Sciatic nerve (tissue), 2 donors: ENCODE measurements at regions of chr15 and their contacts with region 1.

Region 1: DNA sequence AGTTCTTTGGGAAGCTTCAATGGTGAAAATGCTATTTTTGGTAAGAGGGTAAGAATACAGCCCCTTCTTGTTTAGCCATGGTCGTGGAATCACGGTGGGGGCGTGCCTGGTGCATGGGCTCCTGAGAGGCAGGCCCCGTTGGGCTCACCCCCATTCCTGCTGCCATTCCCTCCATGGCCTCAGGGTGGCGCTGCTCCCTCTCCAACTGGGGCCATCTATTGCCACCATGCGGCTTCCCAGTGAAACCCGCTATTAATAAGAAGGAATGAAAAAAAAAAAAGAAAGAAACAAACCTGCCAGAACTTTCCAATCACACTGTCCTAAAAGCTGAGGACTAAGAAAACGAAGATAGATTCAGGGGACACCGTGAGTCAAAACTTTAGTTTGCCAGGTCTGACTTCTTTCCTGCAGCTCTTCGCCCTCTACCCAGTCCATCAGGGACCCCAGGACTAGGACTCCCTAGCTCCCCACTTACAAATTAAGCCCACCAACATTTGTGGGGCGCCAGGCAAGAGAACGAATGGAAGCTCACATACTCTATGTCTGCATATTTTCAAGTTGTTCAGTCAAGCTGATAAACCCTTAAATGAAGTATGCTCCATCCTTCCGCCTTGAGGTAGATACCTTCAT is 30.6 kb upstream of the ABHD2 start:
- DNase-seq: peak; percentile 90
- ATAC-seq: peak; percentile 89

Region 2: DNA sequence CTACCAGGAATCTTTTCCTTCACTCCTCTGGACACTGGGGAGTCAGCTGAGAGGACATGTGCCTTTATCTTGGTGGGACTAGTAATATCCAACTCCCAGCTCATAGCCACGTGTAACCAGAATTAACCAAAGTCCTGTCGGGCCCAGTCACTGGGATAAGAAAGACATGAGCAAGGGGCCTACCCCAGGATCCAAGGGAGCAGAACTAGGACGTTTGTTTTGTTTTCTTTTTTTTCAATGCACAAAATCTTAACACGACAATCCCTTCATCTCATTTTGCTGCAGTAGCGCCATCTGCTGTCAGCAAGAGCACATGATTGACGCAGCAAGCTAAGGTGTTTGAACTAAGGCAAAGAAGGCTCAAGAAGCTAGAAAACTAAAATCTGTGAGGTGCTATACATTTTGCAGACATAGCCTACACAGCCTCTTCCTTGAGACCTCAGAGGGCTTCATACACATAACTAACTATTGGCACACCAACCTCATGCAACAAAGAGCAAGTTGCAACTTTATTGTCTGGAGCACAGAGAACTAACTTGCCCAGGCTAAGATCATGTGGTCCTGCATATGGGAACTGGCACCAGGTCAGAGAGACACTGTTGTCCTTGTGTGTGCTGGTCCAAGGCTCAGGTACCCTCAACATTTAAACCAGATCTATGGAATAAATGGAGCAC is 120.2 kb after region 1 on chr15:
- intact Hi-C with region 1: loop called (anchors 5 kb)
- DNase-seq: peak; percentile 87
- ATAC-seq: peak; percentile 71